Calu3 (cell line): ENCODE measurements at regions of chr22 and their contacts with region 1.

Region 1: DNA sequence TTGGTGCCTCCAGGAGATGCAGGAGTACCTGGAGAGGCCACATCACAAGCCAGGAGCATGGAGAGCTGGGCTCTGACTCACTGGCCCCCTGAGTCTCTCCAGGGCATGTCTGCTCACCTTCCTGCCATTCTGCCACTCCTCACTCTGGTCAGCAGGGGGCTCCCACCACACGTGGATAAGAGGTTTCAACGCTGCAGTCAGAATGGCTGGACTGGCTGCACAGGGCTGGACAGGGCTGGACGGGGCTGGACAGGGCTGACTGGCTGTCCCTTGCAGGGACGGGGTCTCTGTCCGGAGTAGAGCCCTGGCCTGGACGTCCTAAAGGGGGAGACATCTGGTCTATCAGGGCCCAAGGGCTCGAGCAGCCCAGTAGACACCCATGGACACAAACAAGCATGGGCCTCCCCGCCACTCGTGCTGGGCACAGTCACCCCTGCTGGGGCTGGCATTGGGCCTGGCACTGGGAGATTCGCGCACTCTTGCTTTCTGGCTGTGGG is 34.6 kb downstream of the CYTH4 start:
- DNase-seq: peak; percentile 92
- H3K4me3 Mint-ChIP-seq: no peak overlapping the region
- H3K27ac Mint-ChIP-seq: no peak overlapping the region
- H3K4me1 Mint-ChIP-seq: peaks cover 50% of the 10 kb centered on the region
- H3K27me3 Mint-ChIP-seq: no peaks in the 10 kb centered on the region
- CTCF ChIP-seq: peak; percentile 95

Region 2: GRCh38 chr22:37212167-37212906 is 104.6 kb before region 1 on chr22 and contains the start of gene SSTR3:
- CTCF ChIA-PET with region 1: no interaction called
- intact Hi-C with region 1: no loop called
- DNase-seq: no peak
- H3K4me3 Mint-ChIP-seq: no peak within 1 kb of the TSS
- H3K27ac Mint-ChIP-seq: no peak within 1 kb of the TSS
- H3K4me1 Mint-ChIP-seq: no peaks in the 10 kb centered on the region
- H3K27me3 Mint-ChIP-seq: peaks cover 83% of the 10 kb centered on the region
- CTCF ChIP-seq: no peak
- total RNA-seq, gene SSTR3: not detected in 2 replicates

Region 3: GRCh38 chr22:37284805-37285355 is 32.0 kb before region 1 on chr22:
- CTCF ChIA-PET with region 1: no interaction called
- intact Hi-C with region 1: no loop called
- DNase-seq: no peak
- H3K4me3 Mint-ChIP-seq: no peak overlapping the region
- H3K27ac Mint-ChIP-seq: no peak overlapping the region
- H3K4me1 Mint-ChIP-seq: peaks cover 15% of the 10 kb centered on the region
- H3K27me3 Mint-ChIP-seq: peaks cover 38% of the 10 kb centered on the region
- CTCF ChIP-seq: no peak

Region 4: DNA sequence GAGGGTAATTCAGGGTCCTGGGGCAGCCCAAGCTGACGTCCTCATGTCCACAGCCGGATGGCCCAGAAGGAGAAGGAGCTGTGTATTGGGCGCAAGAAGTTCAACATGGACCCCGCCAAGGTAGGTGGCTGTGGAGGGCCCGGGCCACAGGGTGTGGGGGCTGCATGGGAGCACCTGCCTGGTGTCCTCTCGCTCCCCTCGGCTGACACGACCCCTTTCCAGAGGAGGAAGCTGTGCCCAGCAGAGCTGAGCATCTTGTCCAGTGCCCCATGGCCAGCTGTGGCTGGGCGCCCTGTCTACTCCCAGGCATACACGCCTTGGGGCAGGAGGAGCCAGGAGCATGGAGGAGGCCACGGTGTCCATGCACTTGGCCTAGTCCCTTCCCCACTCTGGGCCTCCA is 21.0 kb before region 1 on chr22:
- CTCF ChIA-PET with region 1: no interaction called
- intact Hi-C with region 1: no loop called
- DNase-seq: no peak
- H3K4me3 Mint-ChIP-seq: no peak overlapping the region
- H3K27ac Mint-ChIP-seq: no peak overlapping the region
- H3K4me1 Mint-ChIP-seq: peaks cover 5% of the 10 kb centered on the region
- H3K27me3 Mint-ChIP-seq: peaks cover 10% of the 10 kb centered on the region
- CTCF ChIP-seq: no peak

Region 5: GRCh38 chr22:37428649-37429586 is 112.0 kb after region 1 on chr22:
- CTCF ChIA-PET with region 1: interaction called, 16 read pairs
- intact Hi-C with region 1: loop called (anchors 2 kb)
- DNase-seq: peak; percentile 65
- H3K4me3 Mint-ChIP-seq: no peak overlapping the region
- H3K27ac Mint-ChIP-seq: no peak overlapping the region
- H3K4me1 Mint-ChIP-seq: peaks cover 35% of the 10 kb centered on the region
- H3K27me3 Mint-ChIP-seq: peaks cover 51% of the 10 kb centered on the region
- CTCF ChIP-seq: peak; percentile 92